ENCODE measurements at regions of chr2 and their contacts with region 1.

Region 1: GRCh38 chr2:108355906-108356734 is 21.6 kb upstream of the SULT1C4 start:
- DNase-seq: no peak
- H3K4me3 ChIP-seq: no peak overlapping the region
- CTCF ChIP-seq: no peak
- POLR2A ChIP-seq: no peak

Region 2: GRCh38 chr2:108575132-108575966 is 219.2 kb after region 1 on chr2:
- intact Hi-C with region 1: loop called (anchors 5 kb)
- DNase-seq: peak in 1 of 2 donors; percentile 7
- H3K4me3 ChIP-seq: no peak overlapping the region
- CTCF ChIP-seq: no peak
- POLR2A ChIP-seq: no peak

Measured in lower leg skin (tissue), 4 donors.